ENCODE measurements at regions of chr1 and their contacts with region 1.

Region 1: DNA sequence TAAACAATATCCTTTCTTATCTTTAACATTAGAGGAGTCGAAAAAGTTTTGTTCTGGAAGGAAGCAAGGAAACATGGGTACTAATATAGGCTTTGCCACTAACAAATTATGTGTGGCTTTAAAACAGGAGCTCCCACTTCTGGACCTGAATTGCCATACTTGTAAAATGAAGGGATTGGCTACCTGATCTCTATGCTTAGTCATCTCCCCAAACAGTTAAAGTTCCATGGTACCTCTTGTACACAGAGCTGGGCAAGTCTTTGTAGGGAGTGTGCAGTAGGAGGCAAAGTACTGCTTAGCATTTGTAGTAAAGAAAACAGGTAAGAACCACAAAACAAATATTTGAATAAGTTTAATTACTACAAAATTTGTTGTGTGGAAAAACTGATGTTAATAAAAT is 81.3 kb downstream of the MAST2 start:
- DNase-seq: no peak
- ATAC-seq: peak; percentile 60
- H3K4me3 ChIP-seq: no peak overlapping the region
- H3K27ac ChIP-seq: no peak overlapping the region
- H3K4me1 ChIP-seq: peaks cover 3 to 13% of the 10 kb centered on the region in 2 experiments; a peak in 3 of 4 replicates
- H3K27me3 ChIP-seq: no peaks in the 10 kb centered on the region
- CTCF ChIP-seq: no peak
- POLR2A ChIP-seq: no peak
- RAD21 ChIP-seq: no peak

Region 2: DNA sequence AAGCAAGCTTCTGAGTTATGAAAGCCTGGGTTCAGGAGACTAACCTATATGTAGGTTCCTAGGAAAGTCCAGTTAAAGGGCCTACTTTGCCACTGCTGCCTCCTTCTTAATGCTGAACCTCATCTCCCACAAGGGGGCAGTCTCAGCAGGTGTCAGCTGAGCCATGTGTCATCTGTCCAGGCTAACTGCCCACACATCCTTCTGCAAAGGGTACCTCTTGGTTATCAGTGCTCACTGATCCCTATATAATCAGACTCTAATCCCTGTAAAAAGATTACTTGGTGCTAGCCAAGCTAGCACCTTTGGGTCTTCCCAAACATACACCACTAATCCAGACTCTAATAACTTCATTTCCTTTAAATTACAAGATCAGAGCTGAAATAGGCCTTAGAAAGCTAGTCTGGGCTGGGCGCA is 372.1 kb before region 1 on chr1:
- CTCF ChIA-PET with region 1: interaction called, 3 read pairs
- POLR2A ChIA-PET with region 1: no interaction called
- RAD21 ChIA-PET with region 1: no interaction called
- intact Hi-C with region 1: loop called (anchors 1 kb)
- DNase-seq: peak; percentile 61
- ATAC-seq: peak; percentile 73
- H3K4me3 ChIP-seq: no peak overlapping the region
- H3K27ac ChIP-seq: no peak overlapping the region
- H3K4me1 ChIP-seq: no peaks in the 10 kb centered on the region
- H3K27me3 ChIP-seq: no peaks in the 10 kb centered on the region
- CTCF ChIP-seq: peak; percentile 63 to 83 (median 78); a peak in 5 of 6 replicates
- POLR2A ChIP-seq: no peak
- RAD21 ChIP-seq: peak; percentile 73

Region 3: DNA sequence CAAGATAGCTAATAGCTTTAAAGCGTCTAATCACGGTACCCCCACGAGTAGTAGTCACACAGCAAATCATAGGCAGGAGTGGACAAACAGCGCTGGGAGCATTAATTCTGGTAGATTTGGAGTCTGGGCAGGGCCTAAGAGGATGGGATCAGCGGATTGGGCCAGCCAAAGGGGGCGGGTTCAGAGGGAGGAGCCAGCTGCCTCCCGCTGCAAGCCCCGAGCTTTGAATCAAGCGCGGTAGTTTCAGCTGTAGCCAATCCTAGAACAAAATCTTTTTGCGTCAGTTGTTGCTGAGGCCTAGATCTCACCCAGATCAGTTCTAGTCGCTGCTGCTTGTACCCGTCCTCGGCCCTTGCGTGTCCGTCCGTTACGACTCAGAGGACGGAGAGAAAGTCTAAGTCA is 301.4 kb before region 1 on chr1:
- CTCF ChIA-PET with region 1: no interaction called
- POLR2A ChIA-PET with region 1: interaction called, 3 read pairs
- RAD21 ChIA-PET with region 1: no interaction called
- intact Hi-C with region 1: loop called (anchors 10 kb)
- DNase-seq: peak; percentile 95
- ATAC-seq: peak; percentile 88
- H3K4me3 ChIP-seq: peak overlapping the region; percentile 98 to 99
- H3K27ac ChIP-seq: peak overlapping the region; percentile 87
- H3K4me1 ChIP-seq: peaks cover 10 to 19% of the 10 kb centered on the region in 2 experiments
- H3K27me3 ChIP-seq: no peaks in the 10 kb centered on the region
- CTCF ChIP-seq: no peak
- POLR2A ChIP-seq: no peak
- RAD21 ChIP-seq: no peak

Region 4: GRCh38 chr1:45643978-45644377 is 240.7 kb before region 1 on chr1:
- CTCF ChIA-PET with region 1: no interaction called
- POLR2A ChIA-PET with region 1: no interaction called
- RAD21 ChIA-PET with region 1: no interaction called
- intact Hi-C with region 1: loop called (anchors 2 kb)
- DNase-seq: peak; percentile 8
- ATAC-seq: peak; percentile 85
- H3K4me3 ChIP-seq: no peak overlapping the region
- H3K27ac ChIP-seq: peak overlapping the region; percentile 2; the same call in 1 of the 2 replicates
- H3K4me1 ChIP-seq: peaks cover 3 to 7% of the 10 kb centered on the region in 2 experiments; a peak in 3 of 4 replicates
- H3K27me3 ChIP-seq: no peaks in the 10 kb centered on the region
- CTCF ChIP-seq: peak; percentile 28 to 48 (median 32); a peak in 4 of 6 replicates
- POLR2A ChIP-seq: no peak
- RAD21 ChIP-seq: peak; percentile 55

Region 5: GRCh38 chr1:45682942-45683341 is 201.8 kb before region 1 on chr1:
- CTCF ChIA-PET with region 1: no interaction called
- POLR2A ChIA-PET with region 1: no interaction called
- RAD21 ChIA-PET with region 1: no interaction called
- intact Hi-C with region 1: no loop called
- DNase-seq: no peak
- ATAC-seq: no peak
- H3K4me3 ChIP-seq: no peak overlapping the region
- H3K27ac ChIP-seq: no peak overlapping the region
- H3K4me1 ChIP-seq: peaks cover 3 to 11% of the 10 kb centered on the region in 2 experiments; a peak in 3 of 4 replicates
- H3K27me3 ChIP-seq: no peaks in the 10 kb centered on the region
- CTCF ChIP-seq: no peak
- POLR2A ChIP-seq: no peak
- RAD21 ChIP-seq: no peak

Region 6: DNA sequence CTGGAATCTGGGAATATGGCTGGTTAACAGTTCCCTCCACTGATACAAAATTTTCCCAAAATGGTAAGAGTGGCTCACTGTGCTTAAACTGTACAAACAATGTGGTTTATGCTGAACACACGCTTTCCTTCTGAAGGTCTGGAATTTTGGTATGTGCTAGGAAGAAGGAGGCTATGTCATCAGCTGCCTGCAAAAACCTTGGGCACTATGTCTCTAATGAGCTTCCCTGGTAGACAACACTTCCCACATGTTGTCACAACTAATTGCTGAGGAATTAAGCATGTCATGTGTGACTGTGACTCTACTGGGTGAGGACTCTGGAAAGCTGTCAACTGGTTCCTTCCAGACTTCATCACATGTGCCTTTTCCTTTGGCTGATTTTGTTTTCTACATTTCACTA is 163.5 kb before region 1 on chr1:
- CTCF ChIA-PET with region 1: no interaction called
- POLR2A ChIA-PET with region 1: no interaction called
- RAD21 ChIA-PET with region 1: no interaction called
- intact Hi-C with region 1: no loop called
- DNase-seq: no peak
- ATAC-seq: no peak
- H3K4me3 ChIP-seq: no peak overlapping the region
- H3K27ac ChIP-seq: no peak overlapping the region
- H3K4me1 ChIP-seq: no peaks in the 10 kb centered on the region; a peak in 2 of 4 replicates
- H3K27me3 ChIP-seq: no peaks in the 10 kb centered on the region
- CTCF ChIP-seq: no peak
- POLR2A ChIP-seq: no peak
- RAD21 ChIP-seq: no peak

Measured in HCT116 (cell line).